ENCODE measurements at regions of chr4 and their contacts with region 1.

Region 1: GRCh38 chr4:186839122-186840037 is 115.7 kb upstream of the FAT1 start:
- DNase-seq: no peak
- ATAC-seq: peak; percentile 41 to 51
- H3K4me3 ChIP-seq: peak overlapping the region; percentile 13 to 31 (median 22)
- H3K27ac ChIP-seq: peak overlapping the region; percentile 66 to 76 (median 68)
- H3K4me1 ChIP-seq: peaks cover 0 to 3% of the 10 kb centered on the region in 2 donors
- H3K27me3 ChIP-seq: no peaks in the 10 kb centered on the region
- CTCF ChIP-seq: no peak
- POLR2A ChIP-seq: no peak

Region 2: GRCh38 chr4:186904101-186904500 is 64.7 kb after region 1 on chr4:
- in situ Hi-C with region 1: no loop called
- intact Hi-C with region 1: loop called (anchors 10 kb)
- DNase-seq: no peak
- ATAC-seq: peak; percentile 58 to 81
- H3K4me3 ChIP-seq: no peak overlapping the region
- H3K27ac ChIP-seq: peak overlapping the region in 1 of 4 donors; percentile 2
- H3K4me1 ChIP-seq: peaks cover 0 to 5% of the 10 kb centered on the region in 2 donors
- H3K27me3 ChIP-seq: no peaks in the 10 kb centered on the region
- CTCF ChIP-seq: no peak
- POLR2A ChIP-seq: no peak